GM10248 (cell line): ENCODE measurements at regions of chr19 and their contacts with region 1.

Region 1: GRCh38 chr19:44954824-44955586 is at the start of gene CLPTM1:
- DNase-seq: peak; percentile 98
- CTCF ChIP-seq: no peak

Region 2: DNA sequence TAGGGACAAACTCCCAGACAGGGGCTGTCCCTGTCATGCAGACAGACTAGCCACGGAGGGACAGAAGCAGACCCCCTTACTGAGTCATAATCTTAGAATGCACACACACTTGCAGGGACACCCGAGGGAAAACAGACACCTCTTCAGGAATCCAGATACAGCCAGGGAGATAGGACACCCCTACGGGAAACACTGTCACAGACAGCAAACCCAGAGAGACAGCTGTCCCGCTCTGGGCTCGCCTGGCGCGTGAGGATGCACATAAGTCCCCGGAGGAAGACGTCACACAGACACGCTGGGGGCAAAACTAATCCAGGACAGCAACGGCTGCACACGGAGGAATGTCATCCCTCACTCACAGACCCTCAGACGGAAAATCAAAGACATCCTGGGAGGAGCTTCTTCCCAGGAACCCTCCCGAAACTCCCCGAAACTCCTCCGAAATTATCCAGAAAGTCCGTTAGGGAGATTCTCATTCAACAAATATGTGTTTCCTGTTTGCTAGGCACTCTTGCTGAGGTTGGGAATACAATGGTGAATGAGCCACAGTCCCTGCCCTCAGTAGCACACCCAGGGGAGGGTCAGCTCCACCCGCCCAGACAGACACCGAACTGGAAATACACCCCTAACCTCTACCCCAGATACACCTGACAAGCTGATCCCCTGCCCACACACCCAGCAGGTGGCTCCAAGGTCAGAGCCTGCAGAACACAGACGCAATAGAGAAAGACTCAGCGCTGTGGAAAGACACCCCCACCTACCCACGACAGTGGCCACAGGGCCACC is 79.1 kb before region 1 on chr19:
- CTCF ChIA-PET with region 1: no interaction called
- POLR2A ChIA-PET with region 1: no interaction called
- DNase-seq: no peak
- CTCF ChIP-seq: no peak

Region 3: GRCh38 chr19:44903602-44904425 is 51.2 kb before region 1 on chr19:
- CTCF ChIA-PET with region 1: interaction called, 95 read pairs
- POLR2A ChIA-PET with region 1: no interaction called
- DNase-seq: peak; percentile 87
- CTCF ChIP-seq: peak; percentile 97

Region 4: DNA sequence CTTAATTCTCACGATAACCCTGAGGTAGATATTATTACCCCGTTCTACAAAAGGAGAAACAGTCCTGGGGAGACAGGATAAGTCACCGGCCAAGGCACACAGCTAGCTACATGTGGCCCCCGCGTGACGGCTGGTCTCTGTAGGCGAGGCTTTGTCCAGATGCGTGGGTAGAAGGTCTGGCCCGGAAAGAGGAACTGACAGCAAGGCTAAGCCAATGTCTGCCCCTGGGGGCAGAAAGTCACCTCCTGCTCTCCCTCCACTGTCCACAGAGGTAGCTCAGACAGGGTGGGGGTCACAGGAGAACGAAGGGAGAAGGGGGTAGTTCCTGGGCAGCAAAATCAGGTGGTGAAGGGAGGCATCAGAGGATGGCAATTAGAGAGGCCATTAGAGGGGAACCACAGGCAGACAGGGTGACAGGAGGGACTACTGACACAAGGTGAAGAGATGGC is 11.2 kb before region 1 on chr19:
- CTCF ChIA-PET with region 1: interaction called, 10 read pairs
- POLR2A ChIA-PET with region 1: no interaction called
- DNase-seq: peak; percentile 90
- CTCF ChIP-seq: peak; percentile 3